ENCODE measurements at regions of chr9 and their contacts with region 1.

Region 1: DNA sequence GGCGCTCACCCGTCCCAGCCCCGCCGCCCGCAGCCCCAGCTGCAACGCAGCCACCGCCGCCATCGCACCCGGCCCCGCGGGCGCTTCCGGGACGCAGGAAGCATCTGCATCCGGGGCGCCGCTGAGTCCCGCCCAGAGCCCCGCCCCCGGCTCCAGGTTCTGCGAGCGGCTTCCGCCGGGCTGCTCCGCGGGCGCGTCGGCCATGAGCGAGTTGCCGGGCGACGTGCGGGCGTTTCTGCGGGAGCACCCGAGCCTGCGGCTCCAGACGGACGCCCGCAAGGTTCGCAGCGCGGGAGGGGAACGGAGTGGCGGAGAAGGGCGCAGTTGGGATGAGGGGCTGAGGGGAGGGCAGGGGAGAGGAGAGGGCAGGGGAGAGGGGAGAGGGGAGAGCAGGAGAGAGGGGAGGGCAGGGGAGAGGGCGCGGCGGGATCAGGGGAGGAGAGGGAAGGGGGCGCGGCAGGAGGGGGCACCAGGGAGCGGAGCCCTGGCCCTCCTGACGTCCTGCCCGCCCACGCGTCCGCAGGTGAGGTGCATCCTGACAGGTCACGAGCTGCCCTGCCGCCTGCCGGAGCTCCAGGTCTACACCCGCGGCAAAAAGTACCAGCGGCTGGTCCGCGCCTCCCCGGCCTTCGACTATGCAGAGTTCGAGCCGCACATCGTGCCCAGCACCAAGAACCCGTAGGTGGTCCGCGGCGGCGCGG is at the starts of genes SURF1 and SURF2:
- DNase-seq: peak; percentile 68
- ATAC-seq: peak; percentile 64
- H3K4me3 ChIP-seq: peak within 1 kb of the TSS; percentile 80 to 91 (median 90)
- H3K27ac ChIP-seq: peak within 1 kb of the TSS; percentile 61
- H3K4me1 ChIP-seq: peaks cover 53% of the 10 kb centered on the region
- H3K27me3 ChIP-seq: no peaks in the 10 kb centered on the region; a peak in 1 of 5 replicates
- CTCF ChIP-seq: peak; percentile 48
- EP300 ChIP-seq: no peak
- POLR2A ChIP-seq: peak in 1 of 2 experiments; percentile 42; a peak in 1 of 4 replicates
- RAD21 ChIP-seq: no peak
- total RNA-seq, gene SURF1: 10.6 and 17.8 TPM in 2 replicates
- total RNA-seq, gene SURF2: 10.3 and 13.6 TPM in 2 replicates

Region 2: GRCh38 chr9:133320421-133320881 is 36.1 kb before region 1 on chr9:
- CTCF ChIA-PET with region 1: no interaction called
- POLR2A ChIA-PET with region 1: no interaction called
- in situ Hi-C with region 1: no loop called
- intact Hi-C with region 1: no loop called
- DNase-seq: no peak
- ATAC-seq: peak; percentile 51
- H3K4me3 ChIP-seq: no peak overlapping the region
- H3K27ac ChIP-seq: no peak overlapping the region
- H3K4me1 ChIP-seq: no peaks in the 10 kb centered on the region
- H3K27me3 ChIP-seq: peaks cover 1 to 2% of the 10 kb centered on the region in 2 experiments; a peak in 1 of 5 replicates
- CTCF ChIP-seq: no peak
- EP300 ChIP-seq: no peak
- POLR2A ChIP-seq: no peak
- RAD21 ChIP-seq: no peak

Region 3: GRCh38 chr9:133387425-133388079 is 31.0 kb after region 1 on chr9:
- CTCF ChIA-PET with region 1: no interaction called
- POLR2A ChIA-PET with region 1: interaction called, 10 read pairs
- in situ Hi-C with region 1: no loop called
- intact Hi-C with region 1: no loop called
- DNase-seq: peak; percentile 17
- ATAC-seq: peak; percentile 23
- H3K4me3 ChIP-seq: peak overlapping the region in 1 of 3 experiments; percentile 27; a peak in 2 of 6 replicates
- H3K27ac ChIP-seq: no peak overlapping the region
- H3K4me1 ChIP-seq: peaks cover 81% of the 10 kb centered on the region
- H3K27me3 ChIP-seq: no peaks in the 10 kb centered on the region
- CTCF ChIP-seq: no peak
- EP300 ChIP-seq: no peak
- POLR2A ChIP-seq: no peak
- RAD21 ChIP-seq: no peak

Region 4: DNA sequence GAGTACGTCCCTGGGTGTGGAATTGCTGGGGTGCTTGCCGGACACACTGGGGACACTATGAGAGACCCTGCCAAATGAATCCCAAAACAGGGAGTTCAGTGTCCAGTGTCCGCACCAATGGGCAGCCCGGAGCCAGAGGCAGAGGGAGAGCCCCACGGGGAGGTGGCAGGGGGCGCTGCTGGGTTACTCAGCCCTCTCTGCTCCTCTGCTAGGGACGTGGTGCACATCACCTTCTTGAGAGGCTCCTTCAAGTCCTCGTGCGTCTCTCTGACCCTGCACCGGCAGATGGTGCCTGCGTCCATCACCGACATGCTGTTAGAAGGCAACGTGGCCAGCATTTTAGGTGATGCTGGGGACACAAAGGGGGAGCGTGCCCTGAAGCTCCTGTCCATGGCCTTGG is 40.4 kb after region 1 on chr9:
- CTCF ChIA-PET with region 1: interaction called, 3 read pairs
- POLR2A ChIA-PET with region 1: interaction called, 5 read pairs
- in situ Hi-C with region 1: no loop called
- intact Hi-C with region 1: loop called (anchors 5 kb)
- DNase-seq: no peak
- ATAC-seq: peak; percentile 52
- H3K4me3 ChIP-seq: no peak overlapping the region
- H3K27ac ChIP-seq: no peak overlapping the region
- H3K4me1 ChIP-seq: peaks cover 47% of the 10 kb centered on the region
- H3K27me3 ChIP-seq: no peaks in the 10 kb centered on the region
- CTCF ChIP-seq: peak; percentile 72
- EP300 ChIP-seq: no peak
- POLR2A ChIP-seq: no peak
- RAD21 ChIP-seq: peak; percentile 26; the same call in 1 of the 2 replicates

Region 5: GRCh38 chr9:133406480-133407307 is 50.2 kb after region 1 on chr9:
- CTCF ChIA-PET with region 1: interaction called, 4 read pairs
- POLR2A ChIA-PET with region 1: no interaction called
- in situ Hi-C with region 1: loop called (anchors 5 kb)
- intact Hi-C with region 1: loop called (anchors 1 kb)
- DNase-seq: peak; percentile 52
- ATAC-seq: peak; percentile 87
- H3K4me3 ChIP-seq: no peak overlapping the region
- H3K27ac ChIP-seq: no peak overlapping the region
- H3K4me1 ChIP-seq: peaks cover 8% of the 10 kb centered on the region
- H3K27me3 ChIP-seq: no peaks in the 10 kb centered on the region
- CTCF ChIP-seq: peak; percentile 96
- EP300 ChIP-seq: no peak
- POLR2A ChIP-seq: 0 out of 4 replicates have a peak, but pooled peaks of 1 of the 2 experiments have one; percentile 4
- RAD21 ChIP-seq: peak; percentile 91

Region 6: DNA sequence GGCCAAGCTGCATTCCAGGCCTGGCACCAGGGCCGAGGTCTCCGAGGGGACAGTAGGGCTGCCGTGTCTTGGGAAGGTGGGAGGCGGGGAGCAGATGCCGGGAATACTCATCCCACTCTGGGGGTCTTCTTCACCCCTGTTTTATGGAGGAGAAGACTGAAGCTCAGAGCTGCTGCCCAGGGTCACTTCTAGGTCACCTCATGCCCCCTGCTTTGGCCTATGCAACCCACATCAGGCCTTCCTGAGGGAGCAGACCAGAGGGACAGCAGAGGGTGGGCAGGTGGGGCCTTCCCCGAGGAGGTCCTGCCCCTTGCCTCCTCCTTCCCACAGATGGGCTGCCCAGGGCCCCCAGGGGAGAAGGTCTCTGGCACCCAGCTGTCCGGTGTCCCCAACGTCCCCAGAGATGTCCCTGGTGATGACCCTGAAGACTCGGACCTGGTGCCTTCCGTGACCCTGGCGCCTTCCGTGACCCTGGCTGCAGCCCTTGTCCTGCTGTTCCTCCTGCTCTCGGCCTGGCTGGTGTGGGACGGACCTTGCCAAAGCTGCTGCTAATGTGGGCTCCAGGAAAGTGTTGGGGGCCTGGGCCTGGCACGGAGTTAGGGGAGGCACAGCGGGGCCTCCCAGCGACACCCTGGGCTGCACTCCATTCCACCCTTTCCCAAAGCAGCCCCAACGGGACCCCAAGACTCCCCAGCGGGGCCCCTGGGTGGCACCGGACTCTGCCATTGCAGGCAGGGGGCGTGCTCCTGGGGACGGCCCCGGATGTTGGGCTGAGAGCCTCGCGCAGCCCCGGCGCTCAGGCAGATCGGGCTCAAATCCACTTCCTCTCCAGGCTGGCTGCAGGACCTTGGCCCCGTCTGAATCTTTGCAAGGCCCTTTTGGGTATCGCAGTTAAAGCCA is 129.1 kb after region 1 on chr9:
- CTCF ChIA-PET with region 1: interaction called, 5 read pairs
- POLR2A ChIA-PET with region 1: no interaction called
- in situ Hi-C with region 1: loop called (anchors 5 kb)
- intact Hi-C with region 1: loop called (anchors 5 kb)
- DNase-seq: no peak
- ATAC-seq: peak; percentile 67
- H3K4me3 ChIP-seq: peak overlapping the region; percentile 27 to 70 (median 47); a peak in 4 of 6 replicates
- H3K27ac ChIP-seq: no peak overlapping the region
- H3K4me1 ChIP-seq: peaks cover 54% of the 10 kb centered on the region
- H3K27me3 ChIP-seq: peaks cover 4 to 54% of the 10 kb centered on the region in 2 experiments
- CTCF ChIP-seq: no peak
- EP300 ChIP-seq: no peak
- POLR2A ChIP-seq: no peak
- RAD21 ChIP-seq: no peak

Region 7: GRCh38 chr9:134944351-134944802 is 1587.8 kb after region 1 on chr9:
- CTCF ChIA-PET with region 1: no interaction called
- POLR2A ChIA-PET with region 1: no interaction called
- in situ Hi-C with region 1: no loop called
- intact Hi-C with region 1: no loop called
- DNase-seq: no peak
- ATAC-seq: no peak
- H3K4me3 ChIP-seq: no peak overlapping the region
- H3K27ac ChIP-seq: no peak overlapping the region
- H3K4me1 ChIP-seq: no peaks in the 10 kb centered on the region
- H3K27me3 ChIP-seq: peaks cover 5 to 37% of the 10 kb centered on the region in 2 experiments; a peak in 4 of 5 replicates
- CTCF ChIP-seq: no peak
- EP300 ChIP-seq: no peak
- POLR2A ChIP-seq: no peak
- RAD21 ChIP-seq: no peak